Activated B cell treated with CpG ODN at 0.5 μM for 24 hours (primary cell): ENCODE measurements at regions of chr3 and their contacts with region 1.

Region 1: GRCh38 chr3:9951962-9952805 is at the start of gene PRRT3:
- DNase-seq: peak; percentile 41
- ATAC-seq: peak; percentile 90
- H3K4me3 Mint-ChIP-seq: peak within 1 kb of the TSS; percentile 85
- H3K27ac Mint-ChIP-seq: no peak within 1 kb of the TSS
- H3K4me1 Mint-ChIP-seq: peaks cover 15% of the 10 kb centered on the region
- H3K27me3 Mint-ChIP-seq: no peaks in the 10 kb centered on the region
- CTCF ChIP-seq: no peak
- total RNA-seq, gene PRRT3: 4.2 and 4.3 TPM in 2 replicates

Region 2: GRCh38 chr3:9078561-9079240 is 873.5 kb before region 1 on chr3:
- CTCF ChIA-PET with region 1: no interaction called
- POLR2A ChIA-PET with region 1: no interaction called
- intact Hi-C with region 1: no loop called
- DNase-seq: no peak
- ATAC-seq: no peak
- H3K4me3 Mint-ChIP-seq: no peak overlapping the region
- H3K27ac Mint-ChIP-seq: no peak overlapping the region
- H3K4me1 Mint-ChIP-seq: no peaks in the 10 kb centered on the region
- H3K27me3 Mint-ChIP-seq: no peaks in the 10 kb centered on the region
- CTCF ChIP-seq: no peak

Region 3: DNA sequence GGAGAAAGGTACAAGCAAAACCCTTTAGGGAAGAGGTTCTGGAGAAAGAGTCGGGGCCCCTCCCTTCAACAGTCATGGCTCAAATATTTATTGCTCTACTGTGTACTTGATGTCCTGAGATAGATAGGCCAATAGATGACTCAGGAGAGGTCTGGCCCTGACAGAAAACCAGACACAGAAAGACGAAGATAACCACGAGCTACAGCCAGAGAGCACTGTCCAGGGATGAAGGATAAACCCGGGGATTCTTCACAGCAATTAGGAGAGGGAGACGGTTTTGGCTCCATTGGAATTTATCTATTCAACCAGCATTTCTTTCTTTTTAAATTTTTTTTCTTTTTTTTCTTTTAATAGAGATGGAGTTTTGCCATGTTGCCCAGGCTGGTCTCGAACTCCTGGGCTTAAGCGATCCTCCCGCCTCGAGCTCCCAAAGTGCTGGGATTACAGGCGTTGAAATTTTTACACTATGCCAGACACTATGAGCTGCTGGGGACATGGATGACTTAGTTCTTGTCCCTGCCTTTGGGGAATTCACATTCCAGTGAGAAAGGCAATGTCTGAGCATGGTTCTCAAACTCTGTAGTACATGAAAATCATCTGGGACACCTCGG is 67.5 kb before region 1 on chr3:
- CTCF ChIA-PET with region 1: no interaction called
- POLR2A ChIA-PET with region 1: no interaction called
- intact Hi-C with region 1: no loop called
- DNase-seq: no peak
- ATAC-seq: no peak
- H3K4me3 Mint-ChIP-seq: no peak overlapping the region
- H3K27ac Mint-ChIP-seq: no peak overlapping the region
- H3K4me1 Mint-ChIP-seq: peaks cover 3% of the 10 kb centered on the region
- H3K27me3 Mint-ChIP-seq: no peaks in the 10 kb centered on the region
- CTCF ChIP-seq: no peak

Region 4: GRCh38 chr3:9970020-9970687 is 18.0 kb after region 1 on chr3:
- CTCF ChIA-PET with region 1: no interaction called
- POLR2A ChIA-PET with region 1: no interaction called
- intact Hi-C with region 1: loop called (anchors 2 kb)
- DNase-seq: no peak
- ATAC-seq: no peak
- H3K4me3 Mint-ChIP-seq: no peak overlapping the region
- H3K27ac Mint-ChIP-seq: no peak overlapping the region
- H3K4me1 Mint-ChIP-seq: no peaks in the 10 kb centered on the region
- H3K27me3 Mint-ChIP-seq: no peaks in the 10 kb centered on the region
- CTCF ChIP-seq: no peak